Ovary (tissue), 10 donors: ENCODE measurements at regions of chr2 and their contacts with region 1.

Region 1: GRCh38 chr2:218466016-218466521 is 47.1 kb downstream of the VIL1 start:
- DNase-seq: no peak
- H3K4me3 ChIP-seq: no peak overlapping the region
- H3K27ac ChIP-seq: no peak overlapping the region
- H3K4me1 ChIP-seq: no peaks in the 10 kb centered on the region
- H3K27me3 ChIP-seq: no peaks in the 10 kb centered on the region
- CTCF ChIP-seq: peak in 2 of 3 donors; percentile 6 to 41
- EP300 ChIP-seq: no peak
- POLR2A ChIP-seq: no peak

Region 2: DNA sequence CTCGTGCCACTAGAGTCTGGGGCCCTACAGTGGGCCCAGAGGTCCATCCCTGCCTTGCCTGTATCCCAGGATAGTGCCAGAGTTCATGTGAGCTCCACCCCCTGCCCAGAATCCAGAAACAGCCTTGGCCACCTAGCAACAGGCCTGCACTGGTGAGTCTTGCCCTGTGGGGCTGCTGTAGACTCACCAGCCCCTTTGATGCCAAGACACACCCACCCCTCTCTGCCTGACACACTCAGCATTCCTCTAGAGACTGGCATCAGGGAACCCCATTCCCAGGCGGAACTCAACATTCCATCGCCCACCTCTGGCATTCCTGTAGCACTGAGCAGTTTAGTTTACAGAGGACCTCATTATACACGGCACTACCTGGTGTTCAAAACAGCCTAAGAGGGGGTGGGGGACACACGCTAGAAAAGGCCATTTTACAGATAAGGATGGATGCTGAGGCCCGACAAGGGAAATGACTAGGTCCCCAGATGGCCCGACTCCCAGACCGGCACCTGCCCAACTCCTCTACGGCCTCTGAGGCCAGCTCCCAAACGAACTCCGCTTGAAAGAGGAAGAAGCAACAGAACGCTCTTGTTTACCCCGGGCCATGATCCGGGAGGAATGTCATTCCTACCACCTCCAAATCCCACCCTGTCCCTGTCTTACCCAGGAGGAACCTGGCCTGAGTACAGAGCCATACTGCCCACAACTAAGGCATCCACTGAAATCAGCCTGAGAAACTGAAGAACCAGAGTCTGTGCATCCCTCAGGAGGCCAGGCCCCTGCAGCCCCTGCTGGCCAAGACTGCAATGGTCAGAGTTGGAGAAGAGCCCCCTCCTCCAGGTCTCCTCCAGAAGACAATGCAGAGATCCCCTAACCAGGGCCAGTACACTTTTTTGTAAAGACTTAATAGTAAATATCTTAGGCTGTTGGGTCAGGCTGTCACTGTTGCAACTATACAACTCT is 643.5 kb before region 1 on chr2:
- intact Hi-C with region 1: no loop called
- DNase-seq: no peak
- H3K4me3 ChIP-seq: no peak overlapping the region
- H3K27ac ChIP-seq: no peak overlapping the region
- H3K4me1 ChIP-seq: peaks cover 9% of the 10 kb centered on the region
- H3K27me3 ChIP-seq: no peaks in the 10 kb centered on the region
- CTCF ChIP-seq: no peak
- EP300 ChIP-seq: no peak
- POLR2A ChIP-seq: no peak

Region 3: GRCh38 chr2:218292048-218293014 is 173.7 kb before region 1 on chr2 and contains the start of gene TMBIM1:
- intact Hi-C with region 1: loop called in 1 of 4 experiments (anchors 10 kb)
- DNase-seq: peak; percentile 76 to 89 (median 83)
- H3K4me3 ChIP-seq: peak within 1 kb of the TSS; percentile 94
- H3K27ac ChIP-seq: peak within 1 kb of the TSS; percentile 89 to 99
- H3K4me1 ChIP-seq: peaks cover 11% of the 10 kb centered on the region
- H3K27me3 ChIP-seq: no peaks in the 10 kb centered on the region
- CTCF ChIP-seq: peak; percentile 72 to 94 (median 87)
- EP300 ChIP-seq: no peak
- POLR2A ChIP-seq: peak; percentile 83
- total RNA-seq, gene TMBIM1: 80.6 to 137 (median 114) TPM

Region 4: DNA sequence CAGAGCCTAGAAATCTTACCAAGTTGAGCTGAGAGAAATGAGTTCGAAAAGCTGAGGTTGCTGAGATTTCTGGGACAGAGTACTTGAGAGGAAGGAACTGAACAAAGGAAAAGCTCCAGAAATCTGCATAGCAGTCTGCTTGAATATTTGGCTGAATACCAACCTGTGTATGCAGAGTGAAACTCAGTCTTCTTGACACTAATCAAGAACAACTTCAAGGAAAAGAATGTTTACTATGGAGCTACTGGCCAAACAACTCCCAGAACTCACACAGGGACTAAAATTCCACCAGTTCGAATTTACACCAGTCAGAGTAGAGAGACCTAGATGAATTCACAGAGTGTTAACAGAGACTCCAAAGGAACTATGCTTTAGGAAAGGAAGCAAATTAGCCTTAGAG is 35.6 kb after region 1 on chr2:
- intact Hi-C with region 1: no loop called
- DNase-seq: no peak
- H3K4me3 ChIP-seq: no peak overlapping the region
- H3K27ac ChIP-seq: no peak overlapping the region
- H3K4me1 ChIP-seq: no peaks in the 10 kb centered on the region
- H3K27me3 ChIP-seq: no peaks in the 10 kb centered on the region
- CTCF ChIP-seq: no peak
- EP300 ChIP-seq: no peak
- POLR2A ChIP-seq: no peak

Region 5: GRCh38 chr2:218635719-218636118 is 169.7 kb after region 1 on chr2:
- intact Hi-C with region 1: no loop called
- DNase-seq: no peak
- H3K4me3 ChIP-seq: no peak overlapping the region
- H3K27ac ChIP-seq: no peak overlapping the region
- H3K4me1 ChIP-seq: no peaks in the 10 kb centered on the region
- H3K27me3 ChIP-seq: no peaks in the 10 kb centered on the region
- CTCF ChIP-seq: no peak
- EP300 ChIP-seq: no peak
- POLR2A ChIP-seq: no peak

Region 6: DNA sequence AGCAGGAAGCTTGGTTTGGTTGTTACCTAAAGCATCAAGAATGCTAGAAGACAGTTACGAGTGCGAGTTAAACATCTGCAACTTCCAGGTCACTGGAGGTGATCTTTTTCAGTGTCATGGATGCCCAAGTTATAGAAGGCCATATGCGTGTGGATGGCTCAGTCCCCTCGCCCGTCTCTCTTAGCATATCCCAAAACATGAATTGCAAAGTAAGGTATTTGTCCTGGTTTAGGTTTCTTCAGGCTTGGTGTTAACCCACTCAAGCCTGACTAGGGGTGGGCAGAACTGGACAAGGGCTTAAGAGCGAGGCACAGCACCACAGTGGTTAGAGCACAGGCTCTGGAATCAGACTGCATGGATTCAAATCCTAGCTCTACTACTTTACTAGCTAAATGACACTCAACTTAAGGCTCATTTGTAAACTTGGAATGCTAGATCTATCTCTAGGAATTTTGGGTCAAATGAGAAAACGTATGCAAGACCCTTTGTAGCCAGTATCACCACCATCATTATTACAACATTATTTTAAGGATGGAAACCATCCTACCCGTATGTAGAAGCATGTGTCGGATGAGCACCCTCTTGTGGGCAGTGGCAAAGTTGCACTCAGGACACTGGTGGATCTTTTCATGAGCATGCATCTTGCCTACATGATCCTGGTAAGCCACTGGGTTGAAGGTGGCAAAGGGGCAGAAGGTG is 182.2 kb after region 1 on chr2:
- intact Hi-C with region 1: no loop called
- DNase-seq: peak in 2 of 5 donors; percentile 51 to 61
- H3K4me3 ChIP-seq: no peak overlapping the region
- H3K27ac ChIP-seq: no peak overlapping the region
- H3K4me1 ChIP-seq: no peaks in the 10 kb centered on the region
- H3K27me3 ChIP-seq: no peaks in the 10 kb centered on the region
- CTCF ChIP-seq: peak in 2 of 3 donors; percentile 36
- EP300 ChIP-seq: no peak
- POLR2A ChIP-seq: no peak